H1 (cell line): ENCODE measurements at regions of chr21 and their contacts with region 1.

Region 1: GRCh38 chr21:32523988-32524719 is 61.2 kb downstream of the TCP10L start:
- DNase-seq: no peak
- H3K4me3 ChIP-seq: no peak overlapping the region
- H3K27ac ChIP-seq: no peak overlapping the region
- H3K4me1 ChIP-seq: peaks cover 0 to 18% (median 7%) of the 10 kb centered on the region in 4 experiments; a peak in 5 of 7 replicates
- H3K27me3 ChIP-seq: no peaks in the 10 kb centered on the region
- CTCF ChIP-seq: no peak
- EP300 ChIP-seq: no peak
- POLR2A ChIP-seq: no peak
- RAD21 ChIP-seq: no peak

Region 2: DNA sequence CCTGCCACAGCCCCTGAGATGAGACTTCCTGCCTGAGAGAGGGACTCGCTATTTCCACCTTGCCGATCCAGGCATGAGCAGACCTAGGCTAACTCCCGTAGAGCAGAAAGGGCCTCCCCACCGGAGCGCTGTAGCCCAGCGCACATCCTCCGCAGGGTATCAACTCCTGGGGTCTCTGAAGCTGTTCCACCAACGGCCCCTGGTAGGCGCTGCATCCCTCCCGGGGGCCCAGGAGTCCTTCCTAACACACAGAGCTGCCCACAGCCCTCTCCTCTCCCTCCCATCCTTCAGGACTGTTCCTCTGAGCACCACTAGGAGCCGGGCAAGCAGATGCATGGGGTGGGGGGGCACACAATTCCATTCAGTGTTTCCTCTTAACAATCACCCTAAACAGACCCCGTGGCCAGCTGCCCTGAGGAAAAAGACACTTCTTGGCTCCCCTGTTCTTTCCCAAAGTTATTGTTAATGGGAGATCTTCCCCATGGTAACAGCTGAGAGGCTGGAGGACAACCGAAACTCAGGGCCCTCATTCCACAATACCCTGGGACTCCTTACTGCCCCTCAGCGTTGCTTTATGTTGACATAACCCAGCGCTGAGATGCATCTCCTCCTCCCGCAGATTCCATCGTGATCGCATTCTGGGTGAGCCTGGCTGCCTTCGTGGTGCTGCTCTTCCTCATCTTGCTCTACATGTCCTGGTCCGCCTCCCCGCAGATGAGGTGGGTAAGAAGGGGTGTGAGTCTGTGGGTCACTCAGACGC is 218.0 kb before region 1 on chr21:
- CTCF ChIA-PET with region 1: no interaction called
- POLR2A ChIA-PET with region 1: no interaction called
- DNase-seq: peak; percentile 86 to 89
- H3K4me3 ChIP-seq: peak overlapping the region in 1 of 4 experiments; percentile 2; a peak in 1 of 8 replicates
- H3K27ac ChIP-seq: no peak overlapping the region
- H3K4me1 ChIP-seq: peaks cover 0 to 7% (median 4%) of the 10 kb centered on the region in 4 experiments; a peak in 5 of 7 replicates
- H3K27me3 ChIP-seq: no peaks in the 10 kb centered on the region
- CTCF ChIP-seq: peak; percentile 78 to 95 (median 93)
- EP300 ChIP-seq: no peak
- POLR2A ChIP-seq: no peak
- RAD21 ChIP-seq: peak; percentile 71 to 72

Region 3: GRCh38 chr21:32545948-32546441 is 21.8 kb after region 1 on chr21:
- CTCF ChIA-PET with region 1: no interaction called
- POLR2A ChIA-PET with region 1: no interaction called
- DNase-seq: no peak
- H3K4me3 ChIP-seq: no peak overlapping the region
- H3K27ac ChIP-seq: no peak overlapping the region
- H3K4me1 ChIP-seq: no peaks in the 10 kb centered on the region
- H3K27me3 ChIP-seq: no peaks in the 10 kb centered on the region
- CTCF ChIP-seq: no peak
- EP300 ChIP-seq: no peak
- POLR2A ChIP-seq: no peak
- RAD21 ChIP-seq: no peak

Region 4: DNA sequence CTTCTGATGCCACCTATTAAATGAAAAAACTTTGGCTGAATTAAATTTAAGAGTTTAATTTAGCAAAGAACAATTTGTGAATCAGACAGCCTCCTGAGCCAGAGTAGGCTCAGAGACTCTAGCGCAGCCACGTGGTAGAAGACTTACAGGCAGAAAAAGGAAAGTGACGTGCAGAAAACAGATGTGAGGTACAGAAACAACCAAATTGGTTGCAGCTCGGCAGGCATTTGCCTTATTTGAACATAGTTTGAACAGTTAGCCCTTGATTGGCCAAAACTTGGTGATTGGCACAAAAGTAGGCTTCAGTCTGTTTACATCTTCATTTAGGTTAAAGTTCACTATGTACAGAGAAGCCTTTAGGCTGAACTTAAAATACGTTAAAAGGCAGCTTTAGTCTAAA is 38.3 kb after region 1 on chr21:
- CTCF ChIA-PET with region 1: interaction called, 12 read pairs
- POLR2A ChIA-PET with region 1: interaction called, 4 read pairs
- DNase-seq: no peak
- H3K4me3 ChIP-seq: peak overlapping the region in 1 of 4 experiments; percentile 41; a peak in 1 of 8 replicates
- H3K27ac ChIP-seq: peak overlapping the region; percentile 53; the same call in 1 of the 2 replicates
- H3K4me1 ChIP-seq: peaks cover 4 to 11% (median 8%) of the 10 kb centered on the region in 4 experiments; a peak in 5 of 7 replicates
- H3K27me3 ChIP-seq: no peaks in the 10 kb centered on the region
- CTCF ChIP-seq: peak; percentile 8 to 66 (median 61)
- EP300 ChIP-seq: no peak
- POLR2A ChIP-seq: no peak
- RAD21 ChIP-seq: peak; percentile 75 to 81

Region 5: GRCh38 chr21:32569261-32570230 is 45.4 kb after region 1 on chr21:
- CTCF ChIA-PET with region 1: interaction called, 11 read pairs
- POLR2A ChIA-PET with region 1: no interaction called
- DNase-seq: peak; percentile 50 to 89
- H3K4me3 ChIP-seq: peak overlapping the region; percentile 39 to 79 (median 74)
- H3K27ac ChIP-seq: no peak overlapping the region
- H3K4me1 ChIP-seq: peaks cover 0 to 7% (median 3%) of the 10 kb centered on the region in 4 experiments; a peak in 4 of 7 replicates
- H3K27me3 ChIP-seq: peaks cover 0 to 2% (median 0%) of the 10 kb centered on the region in 4 experiments; a peak in 1 of 7 replicates
- CTCF ChIP-seq: peak; percentile 77 to 97 (median 82)
- EP300 ChIP-seq: peak in 1 of 2 experiments; percentile 17; a peak in 1 of 3 replicates
- POLR2A ChIP-seq: peak in 1 of 2 experiments; percentile 31; a peak in 2 of 3 replicates
- RAD21 ChIP-seq: peak; percentile 67 to 74